ENCODE measurements at regions of chr3 and their contacts with region 1.

Region 1: DNA sequence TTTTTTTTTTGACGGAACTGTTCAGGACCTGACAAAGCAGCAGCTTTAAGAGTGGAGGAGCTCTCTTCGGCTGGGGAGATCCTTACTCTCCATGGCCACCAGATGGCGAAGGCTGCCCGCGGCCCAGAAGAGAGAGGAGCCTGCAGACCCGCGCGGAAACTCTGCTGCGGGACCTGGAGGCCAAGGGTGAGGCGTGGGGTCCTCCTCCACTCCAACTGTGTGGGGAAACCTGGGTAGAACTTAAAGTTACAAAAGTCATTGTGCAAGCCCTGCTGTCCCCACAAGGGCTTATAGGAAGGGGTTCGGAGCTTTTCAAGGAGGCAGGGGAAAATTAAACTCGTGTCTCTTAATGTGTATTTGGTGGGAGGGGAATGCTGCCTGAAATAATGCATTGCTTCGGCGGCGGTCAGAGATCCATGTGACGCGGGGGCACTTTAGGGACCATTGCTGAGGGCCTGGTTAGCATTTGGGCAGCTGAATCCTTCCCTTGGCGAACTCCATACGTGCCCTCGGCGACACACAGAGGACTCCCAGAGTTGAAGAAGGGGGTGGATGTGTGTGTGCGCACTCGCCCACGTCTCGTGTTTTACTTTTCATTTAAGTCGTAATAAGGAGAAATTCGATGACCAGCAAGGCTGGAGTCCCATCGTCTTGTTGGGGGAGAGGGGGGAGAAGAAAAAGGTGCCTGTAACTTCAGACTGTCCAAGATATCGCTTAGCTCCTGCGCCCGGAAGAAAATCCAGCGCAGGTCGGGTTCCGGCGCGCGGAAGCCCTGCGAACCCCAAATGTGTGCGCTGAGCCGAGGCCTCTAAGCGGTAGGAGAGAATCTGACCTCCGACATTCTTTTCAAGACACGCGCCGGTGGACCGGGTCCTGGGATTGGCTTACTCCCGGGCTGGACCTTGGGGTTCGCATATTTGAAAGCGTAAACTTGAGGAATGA is 9.7 kb downstream of the EOMES start:
- DNase-seq: peak; percentile 90
- ATAC-seq: peak; percentile 93
- H3K4me3 Mint-ChIP-seq: peak overlapping the region; percentile 86
- H3K27ac Mint-ChIP-seq: peak overlapping the region; percentile 90
- H3K4me1 Mint-ChIP-seq: peaks cover 27% of the 10 kb centered on the region
- H3K27me3 Mint-ChIP-seq: peaks cover 41% of the 10 kb centered on the region

Region 2: DNA sequence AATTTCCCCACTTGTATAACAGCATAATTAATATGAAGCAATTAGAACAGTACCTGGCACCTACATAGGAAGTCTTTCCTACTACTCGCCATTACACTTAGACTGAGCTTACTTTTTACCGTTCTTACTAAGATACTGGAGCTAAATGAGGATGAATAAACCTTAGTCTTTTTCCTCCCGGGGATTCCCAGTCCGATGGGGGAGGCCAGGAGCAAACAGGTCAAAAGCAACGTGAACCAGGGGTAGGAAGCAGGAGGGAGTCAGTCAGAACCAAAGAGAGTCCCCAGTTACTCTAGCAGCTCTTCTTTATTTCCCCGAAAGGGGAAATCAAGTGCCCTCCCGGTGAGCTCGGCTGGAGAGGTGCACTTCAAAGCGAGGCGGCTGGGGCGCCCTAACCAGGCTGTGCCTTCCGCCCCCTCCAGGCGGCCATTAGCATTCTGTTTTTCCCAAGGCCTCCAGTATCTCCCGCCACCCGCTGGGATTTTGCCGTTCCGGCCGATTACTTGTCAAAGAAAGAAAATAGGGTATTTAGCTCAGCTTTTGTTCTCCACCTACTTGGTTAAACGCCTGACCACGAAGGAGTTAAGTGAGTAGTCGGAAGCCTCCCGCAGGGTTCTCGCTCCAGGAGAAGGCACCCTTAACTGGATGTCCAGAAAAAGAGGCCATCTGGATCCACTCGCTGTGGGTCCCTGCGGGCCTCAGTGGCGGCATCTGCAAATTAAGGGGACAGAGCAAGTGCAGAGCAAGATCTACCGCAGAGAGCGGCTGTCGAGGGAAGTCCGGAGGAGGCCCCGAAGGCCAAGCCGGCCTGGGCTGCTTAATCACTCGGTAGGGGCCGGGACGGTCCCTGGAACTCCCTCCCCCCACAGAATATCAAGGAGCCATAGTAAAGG is 16.0 kb after region 1 on chr3:
- CTCF ChIA-PET with region 1: interaction called, 65 read pairs
- DNase-seq: peak; percentile 63
- ATAC-seq: peak; percentile 72
- H3K4me3 Mint-ChIP-seq: peak overlapping the region; percentile 48
- H3K27ac Mint-ChIP-seq: no peak overlapping the region
- H3K4me1 Mint-ChIP-seq: peaks cover 36% of the 10 kb centered on the region
- H3K27me3 Mint-ChIP-seq: peaks cover 89% of the 10 kb centered on the region

Region 3: DNA sequence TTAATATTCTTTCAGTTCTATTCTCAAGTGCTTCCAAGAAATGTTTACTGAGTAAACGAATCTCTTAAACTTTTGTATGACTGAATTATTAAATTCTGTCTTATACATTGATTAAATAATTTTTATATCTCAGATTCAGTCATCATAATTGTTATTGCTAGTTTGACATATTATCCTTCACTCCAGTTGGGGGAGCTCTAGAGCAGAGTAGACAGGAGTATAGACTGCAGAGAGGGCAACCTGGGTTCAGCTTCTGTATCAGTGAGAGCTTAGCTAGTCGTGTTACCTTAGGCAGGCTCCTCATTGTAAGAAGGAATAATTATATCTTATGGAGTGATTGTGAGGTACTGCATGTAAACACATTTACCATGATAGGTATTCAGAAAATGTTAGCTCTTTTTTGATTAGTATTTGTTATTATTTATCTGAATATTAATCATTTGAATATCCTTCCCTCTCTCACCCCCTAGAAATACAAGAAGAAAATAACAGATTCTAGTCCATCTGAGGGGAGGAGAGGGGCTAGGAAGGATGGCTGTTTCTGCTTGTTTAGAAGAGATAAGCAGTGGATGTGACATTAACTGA is 605.1 kb after region 1 on chr3:
- CTCF ChIA-PET with region 1: interaction called, 18 read pairs
- DNase-seq: peak; percentile 50
- ATAC-seq: peak; percentile 98
- H3K4me3 Mint-ChIP-seq: no peak overlapping the region
- H3K27ac Mint-ChIP-seq: no peak overlapping the region
- H3K4me1 Mint-ChIP-seq: peaks cover 27% of the 10 kb centered on the region
- H3K27me3 Mint-ChIP-seq: no peaks in the 10 kb centered on the region

Region 4: GRCh38 chr3:28334552-28334951 is 622.1 kb after region 1 on chr3:
- CTCF ChIA-PET with region 1: interaction called, 82 read pairs
- DNase-seq: no peak
- ATAC-seq: no peak
- H3K4me3 Mint-ChIP-seq: no peak overlapping the region
- H3K27ac Mint-ChIP-seq: no peak overlapping the region
- H3K4me1 Mint-ChIP-seq: peaks cover 27% of the 10 kb centered on the region
- H3K27me3 Mint-ChIP-seq: no peaks in the 10 kb centered on the region

Region 5: GRCh38 chr3:28348629-28349483 is 636.4 kb after region 1 on chr3 and contains the starts of genes AZI2 and ZCWPW2:
- CTCF ChIA-PET with region 1: interaction called, 15 read pairs
- DNase-seq: peak; percentile 96
- ATAC-seq: peak; percentile 85
- H3K4me3 Mint-ChIP-seq: peak within 1 kb of the TSS; percentile 86
- H3K27ac Mint-ChIP-seq: peak within 1 kb of the TSS; percentile 99
- H3K4me1 Mint-ChIP-seq: peaks cover 43% of the 10 kb centered on the region
- H3K27me3 Mint-ChIP-seq: no peaks in the 10 kb centered on the region
- total RNA-seq, gene AZI2: 63.3 to 68.1 TPM
- total RNA-seq, gene ZCWPW2: 0.35 TPM in 1 of 2 experiments, not detected in the other